Right ventricle myocardium inferior (tissue), 1 donor: ENCODE measurements at regions of chr2 and their contacts with region 1.

Region 1: GRCh38 chr2:68487773-68488355 is 20.5 kb downstream of the APLF start:
- DNase-seq: no peak
- ATAC-seq: no peak

Region 2: DNA sequence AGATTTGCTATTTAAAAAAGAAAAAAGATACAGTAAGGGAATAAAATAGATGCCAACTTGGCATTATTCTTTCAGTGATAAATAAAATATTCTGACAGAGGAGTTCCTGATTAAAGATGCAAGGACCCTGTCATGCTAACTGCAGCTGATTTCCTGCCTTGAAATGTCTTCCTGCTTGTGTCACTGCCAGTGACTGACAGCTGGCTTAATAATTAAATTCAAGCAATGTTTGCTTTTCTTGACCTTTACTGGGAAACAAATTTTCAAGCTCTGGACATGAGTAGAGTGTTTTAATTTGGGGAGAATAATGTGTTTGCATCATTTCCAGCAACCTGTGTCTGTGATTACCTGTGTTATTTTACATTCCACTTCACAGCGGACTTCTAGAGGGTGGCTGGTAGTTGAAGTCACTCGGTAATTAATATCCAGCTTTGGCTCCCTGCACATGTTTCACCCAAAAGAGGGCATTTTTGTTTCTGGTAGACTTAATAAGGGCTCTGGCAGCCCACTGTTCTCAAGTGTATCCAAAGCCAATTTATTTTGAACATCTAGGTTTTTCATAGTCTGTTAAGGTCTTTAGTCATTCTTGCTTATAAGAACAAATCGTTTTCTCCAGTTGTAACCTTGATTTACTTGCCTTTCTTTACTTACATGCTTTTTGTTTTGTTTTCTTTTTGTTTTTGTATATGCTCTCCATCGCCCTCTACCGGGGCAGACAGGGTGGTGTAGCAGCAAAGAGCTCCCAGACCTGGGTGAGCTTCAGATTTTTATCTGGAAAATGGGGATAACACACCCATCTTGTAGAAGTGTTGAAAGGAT is 107.0 kb after region 1 on chr2:
- intact Hi-C with region 1: loop called (anchors 2 kb)
- DNase-seq: peak; percentile 75
- ATAC-seq: no peak